ENCODE measurements at regions of chr9 and their contacts with region 1.

Region 1: GRCh38 chr9:113501129-113501686 is 37.7 kb downstream of the RGS3 start:
- DNase-seq: no peak
- ATAC-seq: peak; percentile 59

Region 2: GRCh38 chr9:113299800-113300292 is 201.4 kb before region 1 on chr9:
- intact Hi-C with region 1: no loop called
- DNase-seq: no peak
- ATAC-seq: no peak

Region 3: DNA sequence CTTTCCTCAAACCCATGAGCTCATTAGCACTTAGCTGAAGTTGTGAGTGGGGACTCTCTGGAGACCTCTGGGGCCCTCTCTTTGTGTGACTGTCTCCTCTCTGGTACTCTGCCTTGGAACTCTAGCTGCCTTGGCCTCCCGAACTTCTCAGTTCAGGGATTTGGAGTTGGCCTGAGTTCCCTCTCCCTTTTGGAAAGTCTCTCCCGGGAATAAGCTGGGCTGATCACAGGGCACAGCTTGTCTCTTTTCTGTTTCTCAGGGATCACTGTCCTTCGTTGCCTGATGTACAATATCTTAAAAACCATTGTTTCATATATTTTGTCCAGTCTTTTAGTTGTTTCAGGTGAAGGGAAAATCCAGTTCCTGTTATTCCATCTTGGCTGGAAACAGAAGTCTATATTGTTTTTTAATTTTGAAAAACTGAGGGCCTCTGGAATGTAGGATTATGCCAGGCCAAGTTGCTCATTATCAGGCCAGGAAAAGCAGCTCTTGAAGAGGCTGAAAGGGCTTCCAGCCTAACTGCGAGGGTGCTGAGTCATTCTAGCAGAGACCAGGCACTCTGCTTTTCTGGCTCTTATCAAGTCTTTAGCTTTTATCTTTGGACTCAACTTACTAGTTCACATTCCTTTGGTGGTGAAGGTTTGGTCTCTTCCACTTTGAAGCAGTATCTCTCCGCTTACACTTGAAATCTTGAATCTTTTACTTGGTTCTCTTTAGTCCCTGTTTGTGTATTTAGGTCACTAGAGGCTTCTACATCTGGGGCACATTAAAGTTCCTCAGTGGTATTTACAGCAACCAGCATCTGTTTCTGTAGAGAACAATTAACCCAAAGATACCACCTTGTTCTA is 46.1 kb before region 1 on chr9:
- intact Hi-C with region 1: loop called (anchors 5 kb)
- DNase-seq: no peak
- ATAC-seq: peak; percentile 95

Region 4: DNA sequence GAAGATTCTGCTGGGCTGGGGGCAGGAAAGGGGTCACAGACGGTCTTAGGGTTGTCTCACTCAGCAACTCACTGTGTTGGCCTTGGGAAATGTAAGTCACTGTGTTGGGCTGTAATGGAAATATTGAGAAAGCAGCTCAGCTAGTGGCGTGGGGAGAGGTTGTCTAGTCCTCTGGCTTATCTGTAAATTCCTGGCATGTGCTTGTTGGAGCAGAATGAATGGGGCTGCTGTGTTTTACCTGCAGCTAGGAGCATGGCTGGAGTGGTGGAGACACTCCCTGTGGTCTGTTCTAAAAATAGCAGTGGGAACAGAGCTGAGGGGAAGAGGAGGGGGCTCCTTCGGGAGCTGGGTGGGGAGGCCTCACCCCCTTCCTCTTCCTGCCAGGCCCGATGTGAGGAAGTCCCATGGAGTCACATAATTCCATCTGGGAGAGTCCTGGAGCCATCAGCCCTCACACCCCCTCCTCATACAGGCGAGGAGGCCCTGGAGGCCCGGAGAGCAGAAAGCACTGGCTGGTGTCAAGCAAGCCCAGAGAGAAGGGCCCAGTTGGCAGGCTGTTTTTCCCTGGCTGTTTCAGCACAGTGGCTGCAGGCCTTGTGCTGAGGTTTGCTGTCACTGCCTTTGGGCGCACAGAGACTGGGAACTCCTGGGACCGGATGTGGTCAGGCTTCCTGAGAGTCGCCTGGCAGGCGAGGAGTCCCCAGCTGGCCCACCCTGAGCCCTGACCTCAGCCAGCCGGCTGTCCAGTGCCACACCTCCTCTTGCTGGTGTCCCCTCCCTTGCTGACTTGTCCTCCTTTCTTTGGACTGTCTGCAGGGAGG is 47.2 kb after region 1 on chr9:
- intact Hi-C with region 1: loop called (anchors 2 kb)
- DNase-seq: peak; percentile 88
- ATAC-seq: peak; percentile 94

Region 5: GRCh38 chr9:113578882-113579282 is 77.7 kb after region 1 on chr9:
- intact Hi-C with region 1: no loop called
- DNase-seq: no peak
- ATAC-seq: no peak